Ascending aorta (tissue), 2 donors: ENCODE measurements at regions of chr12 and their contacts with region 1.

Region 1: GRCh38 chr12:128829861-128830504 is 6.2 kb upstream of the SLC15A4 start:
- DNase-seq: no peak
- H3K4me3 ChIP-seq: no peak overlapping the region
- H3K27ac ChIP-seq: no peak overlapping the region
- H3K4me1 ChIP-seq: peaks cover 0 to under 1% of the 10 kb centered on the region in 2 donors
- H3K27me3 ChIP-seq: no peaks in the 10 kb centered on the region
- CTCF ChIP-seq: no peak

Region 2: DNA sequence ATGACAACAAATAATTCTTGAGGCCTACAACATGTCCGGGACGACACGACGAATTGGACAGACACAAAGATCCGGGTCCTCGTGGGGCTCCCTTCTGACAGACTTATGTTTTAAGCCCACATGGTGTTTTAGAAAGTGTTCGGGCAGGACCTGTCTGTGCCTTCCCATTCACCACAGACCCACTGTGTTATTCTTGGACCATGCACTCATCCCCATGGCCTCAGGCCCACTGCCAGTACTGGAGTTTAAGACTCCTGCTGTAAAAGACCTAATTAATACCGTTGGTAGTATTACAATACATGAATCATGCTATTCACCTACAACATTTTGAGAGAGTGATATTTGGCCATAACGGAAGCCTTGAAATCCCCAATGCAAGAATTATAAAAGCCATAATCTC is 26.2 kb before region 1 on chr12:
- intact Hi-C with region 1: no loop called
- DNase-seq: no peak
- H3K4me3 ChIP-seq: no peak overlapping the region
- H3K27ac ChIP-seq: no peak overlapping the region
- H3K4me1 ChIP-seq: peaks cover 0 to 6% of the 10 kb centered on the region in 2 donors
- H3K27me3 ChIP-seq: no peaks in the 10 kb centered on the region
- CTCF ChIP-seq: no peak

Region 3: GRCh38 chr12:128844031-128844635 is 14.2 kb after region 1 on chr12:
- intact Hi-C with region 1: loop called (anchors 1 kb)
- DNase-seq: no peak
- H3K4me3 ChIP-seq: no peak overlapping the region
- H3K27ac ChIP-seq: no peak overlapping the region
- H3K4me1 ChIP-seq: no peaks in the 10 kb centered on the region
- H3K27me3 ChIP-seq: no peaks in the 10 kb centered on the region
- CTCF ChIP-seq: no peak

Region 4: DNA sequence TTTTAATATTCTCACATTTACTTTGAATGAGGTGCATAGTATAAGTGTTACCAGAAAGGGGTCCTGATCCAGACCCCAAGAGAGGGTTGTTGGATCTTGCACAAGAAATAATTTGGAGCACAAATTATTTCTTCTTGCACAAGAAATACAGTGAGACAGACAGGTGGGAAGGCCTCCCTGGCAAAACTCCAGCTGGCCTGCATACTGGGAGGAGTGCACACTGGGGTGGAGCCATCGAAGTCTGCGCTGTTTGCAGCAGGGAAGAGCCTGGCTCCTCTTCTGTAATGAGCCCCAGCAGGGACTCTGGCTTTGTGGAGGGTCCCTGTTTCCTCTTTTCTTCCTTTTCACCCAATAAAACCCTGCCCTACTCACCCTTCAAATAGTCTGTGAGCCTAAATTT is 164.9 kb after region 1 on chr12:
- intact Hi-C with region 1: no loop called
- DNase-seq: no peak
- H3K4me3 ChIP-seq: no peak overlapping the region
- H3K27ac ChIP-seq: no peak overlapping the region
- H3K4me1 ChIP-seq: no peaks in the 10 kb centered on the region
- H3K27me3 ChIP-seq: no peaks in the 10 kb centered on the region
- CTCF ChIP-seq: no peak

Region 5: DNA sequence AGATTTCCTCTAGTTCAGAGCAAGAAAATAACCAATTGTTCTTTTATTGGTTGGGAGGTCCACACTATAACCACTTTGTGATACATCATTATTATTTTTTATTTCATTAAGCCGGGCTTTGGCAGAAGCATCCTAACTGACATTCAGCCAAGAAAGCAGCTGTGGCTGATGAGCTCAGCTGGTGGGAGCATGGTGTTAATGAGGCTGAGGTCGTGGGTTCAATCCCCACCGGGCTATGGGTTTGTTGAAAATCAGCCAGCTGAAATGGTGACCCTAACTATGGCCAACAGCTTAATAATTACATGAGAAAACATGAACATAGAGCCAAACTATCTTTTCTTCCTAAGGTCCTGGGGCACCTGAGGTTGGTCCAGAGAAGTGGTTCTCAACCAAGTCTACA is 401.5 kb after region 1 on chr12:
- intact Hi-C with region 1: no loop called
- DNase-seq: no peak
- H3K4me3 ChIP-seq: no peak overlapping the region
- H3K27ac ChIP-seq: no peak overlapping the region
- H3K4me1 ChIP-seq: no peaks in the 10 kb centered on the region
- H3K27me3 ChIP-seq: no peaks in the 10 kb centered on the region
- CTCF ChIP-seq: no peak